ENCODE measurements at regions of chr17 and their contacts with region 1.

Region 1: GRCh38 chr17:40522250-40522952 is 21.0 kb upstream of the TNS4 start:
- DNase-seq: no peak
- H3K4me3 ChIP-seq: no peak overlapping the region
- H3K27ac ChIP-seq: peak overlapping the region; percentile 100
- H3K4me1 ChIP-seq: peaks cover 62% of the 10 kb centered on the region
- H3K27me3 ChIP-seq: no peaks in the 10 kb centered on the region
- CTCF ChIP-seq: no peak

Region 2: DNA sequence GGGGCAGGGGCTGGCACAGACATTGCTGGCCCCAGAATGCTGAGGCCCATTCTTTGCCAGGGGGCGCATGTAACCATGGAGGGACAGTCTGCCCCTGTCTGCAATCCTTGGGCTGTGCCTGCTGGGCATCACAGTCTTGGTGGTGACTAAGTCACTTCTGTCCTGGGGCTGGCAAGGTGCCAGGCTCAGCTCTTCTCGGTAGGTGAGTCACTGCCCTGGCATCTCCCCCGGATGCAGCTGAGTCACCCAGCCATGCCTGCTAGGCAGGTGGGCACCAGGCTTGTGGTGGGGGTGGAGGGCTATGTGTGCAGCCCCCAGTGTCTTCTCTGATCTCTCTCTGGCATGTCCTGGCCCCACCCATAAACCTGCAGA is 207.8 kb before region 1 on chr17:
- CTCF ChIA-PET with region 1: no interaction called
- dilution Hi-C with region 1: no loop called
- in situ Hi-C with region 1: no loop called
- intact Hi-C with region 1: no loop called
- DNase-seq: peak; percentile 94
- H3K4me3 ChIP-seq: no peak overlapping the region
- H3K27ac ChIP-seq: no peak overlapping the region
- H3K4me1 ChIP-seq: peaks cover 77% of the 10 kb centered on the region
- H3K27me3 ChIP-seq: no peaks in the 10 kb centered on the region
- CTCF ChIP-seq: no peak

Region 3: GRCh38 chr17:40490289-40490853 is 32.0 kb before region 1 on chr17:
- CTCF ChIA-PET with region 1: no interaction called
- dilution Hi-C with region 1: loop called (anchors 5 kb)
- in situ Hi-C with region 1: no loop called
- intact Hi-C with region 1: no loop called
- DNase-seq: peak; percentile 85
- H3K4me3 ChIP-seq: no peak overlapping the region
- H3K27ac ChIP-seq: peak overlapping the region; percentile 96
- H3K4me1 ChIP-seq: peaks cover 97% of the 10 kb centered on the region
- H3K27me3 ChIP-seq: no peaks in the 10 kb centered on the region
- CTCF ChIP-seq: peak in 1 of 2 donors; percentile 1

Region 4: GRCh38 chr17:40510328-40510648 is 12.1 kb before region 1 on chr17:
- CTCF ChIA-PET with region 1: interaction called, 3 read pairs
- dilution Hi-C with region 1: no loop called
- in situ Hi-C with region 1: no loop called
- intact Hi-C with region 1: loop called (anchors 1 kb)
- DNase-seq: peak; percentile 99
- H3K4me3 ChIP-seq: no peak overlapping the region
- H3K27ac ChIP-seq: peak overlapping the region; percentile 100
- H3K4me1 ChIP-seq: peaks cover 30% of the 10 kb centered on the region
- H3K27me3 ChIP-seq: no peaks in the 10 kb centered on the region
- CTCF ChIP-seq: no peak

Measured in mammary epithelial cell (primary cell).